Dorsolateral prefrontal cortex (tissue), 120 donors: ENCODE measurements at regions of chr3 and their contacts with region 1.

Region 1: GRCh38 chr3:152444029-152444641 is 175.4 kb downstream of the MBNL1 start:
- DNase-seq: no peak
- H3K4me3 ChIP-seq: peak overlapping the region in 20 of 59 donors; percentile 1 to 45 (median 19)
- H3K27ac ChIP-seq: peak overlapping the region in 40 of 59 donors; percentile 2 to 78 (median 36)
- H3K27me3 ChIP-seq: no peaks in the 10 kb centered on the region
- CTCF ChIP-seq: peak; percentile 55 to 93 (median 84)

Region 2: GRCh38 chr3:152151216-152151876 is 292.8 kb before region 1 on chr3:
- intact Hi-C with region 1: no loop called
- DNase-seq: no peak
- H3K4me3 ChIP-seq: no peak overlapping the region
- H3K27ac ChIP-seq: no peak overlapping the region
- H3K27me3 ChIP-seq: no peaks in the 10 kb centered on the region
- CTCF ChIP-seq: no peak

Region 3: DNA sequence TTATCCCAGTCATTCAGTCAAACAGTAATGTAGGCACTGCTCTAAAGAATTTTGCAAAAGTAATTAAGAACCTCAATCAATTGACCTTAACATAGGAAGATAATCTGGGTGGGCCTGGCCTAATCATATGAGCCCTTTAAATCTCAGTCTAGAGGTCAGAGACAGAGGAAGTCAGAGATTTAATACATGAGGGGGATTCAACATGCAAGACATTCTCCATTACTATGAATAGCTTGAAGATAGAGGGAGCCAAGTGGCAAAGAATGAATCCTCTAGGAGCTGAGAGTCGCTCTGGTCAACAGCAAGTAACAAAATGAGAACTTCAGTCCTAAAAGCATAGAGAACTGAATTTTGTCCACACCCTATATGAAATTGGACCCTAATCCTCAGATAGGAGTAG is 214.4 kb before region 1 on chr3:
- intact Hi-C with region 1: loop called (anchors 2 to 5 kb)
- DNase-seq: no peak
- H3K4me3 ChIP-seq: no peak overlapping the region
- H3K27ac ChIP-seq: no peak overlapping the region
- H3K27me3 ChIP-seq: no peaks in the 10 kb centered on the region
- CTCF ChIP-seq: peak in 54 of 56 donors; percentile 25 to 83 (median 59)

Region 4: GRCh38 chr3:152268555-152269425 is 175.3 kb before region 1 on chr3 and contains the start of gene MBNL1:
- intact Hi-C with region 1: loop called (anchors 2 to 5 kb)
- DNase-seq: peak; percentile 61 to 84 (median 78)
- H3K4me3 ChIP-seq: peak within 1 kb of the TSS; percentile 62 to 97 (median 89)
- H3K27ac ChIP-seq: peak within 1 kb of the TSS; percentile 88 to 100 (median 99)
- H3K27me3 ChIP-seq: no peaks in the 10 kb centered on the region
- CTCF ChIP-seq: peak in 21 of 56 donors; percentile 3 to 37 (median 17)
- total RNA-seq, gene MBNL1: 106 to 168 (median 132) TPM

Region 5: GRCh38 chr3:152385761-152386160 is 58.4 kb before region 1 on chr3:
- intact Hi-C with region 1: loop called in 1 of 2 experiments (anchors 10 kb)
- DNase-seq: no peak
- H3K4me3 ChIP-seq: no peak overlapping the region
- H3K27ac ChIP-seq: peak overlapping the region in 50 of 59 donors; percentile 3 to 94 (median 84)
- H3K27me3 ChIP-seq: no peaks in the 10 kb centered on the region
- CTCF ChIP-seq: no peak